ENCODE measurements at regions of chr1 and their contacts with region 1.

Region 1: GRCh38 chr1:103199001-103199400 is 90.7 kb upstream of the COL11A1 start:
- DNase-seq: no peak
- H3K4me3 ChIP-seq: no peak overlapping the region
- H3K27ac ChIP-seq: no peak overlapping the region
- H3K4me1 ChIP-seq: no peaks in the 10 kb centered on the region
- H3K27me3 ChIP-seq: no peaks in the 10 kb centered on the region
- CTCF ChIP-seq: no peak
- EP300 ChIP-seq: no peak
- POLR2A ChIP-seq: no peak

Region 2: DNA sequence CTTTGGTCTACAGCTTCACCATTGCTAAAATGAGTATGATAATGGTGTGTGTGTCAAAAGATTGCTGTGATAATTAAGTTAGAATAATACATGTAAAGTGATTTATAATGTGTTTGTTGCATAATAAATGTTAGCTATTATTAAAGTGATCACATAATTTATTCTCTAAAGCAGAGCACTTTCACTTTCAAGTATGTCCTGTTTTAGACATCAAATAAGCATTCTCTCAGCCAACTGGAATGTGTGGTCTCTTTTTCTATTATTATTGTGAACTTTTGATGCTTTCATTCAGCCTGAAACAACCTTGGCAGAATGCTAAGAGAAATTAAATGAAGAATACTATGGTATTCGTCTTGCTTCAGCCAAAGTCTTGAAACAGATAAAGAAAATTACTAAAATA is 12.1 kb after region 1 on chr1:
- intact Hi-C with region 1: loop called in 1 of 4 experiments (anchors 2 kb)
- DNase-seq: no peak
- H3K4me3 ChIP-seq: no peak overlapping the region
- H3K27ac ChIP-seq: no peak overlapping the region
- H3K4me1 ChIP-seq: no peaks in the 10 kb centered on the region
- H3K27me3 ChIP-seq: no peaks in the 10 kb centered on the region
- CTCF ChIP-seq: no peak
- EP300 ChIP-seq: no peak
- POLR2A ChIP-seq: no peak

Region 3: DNA sequence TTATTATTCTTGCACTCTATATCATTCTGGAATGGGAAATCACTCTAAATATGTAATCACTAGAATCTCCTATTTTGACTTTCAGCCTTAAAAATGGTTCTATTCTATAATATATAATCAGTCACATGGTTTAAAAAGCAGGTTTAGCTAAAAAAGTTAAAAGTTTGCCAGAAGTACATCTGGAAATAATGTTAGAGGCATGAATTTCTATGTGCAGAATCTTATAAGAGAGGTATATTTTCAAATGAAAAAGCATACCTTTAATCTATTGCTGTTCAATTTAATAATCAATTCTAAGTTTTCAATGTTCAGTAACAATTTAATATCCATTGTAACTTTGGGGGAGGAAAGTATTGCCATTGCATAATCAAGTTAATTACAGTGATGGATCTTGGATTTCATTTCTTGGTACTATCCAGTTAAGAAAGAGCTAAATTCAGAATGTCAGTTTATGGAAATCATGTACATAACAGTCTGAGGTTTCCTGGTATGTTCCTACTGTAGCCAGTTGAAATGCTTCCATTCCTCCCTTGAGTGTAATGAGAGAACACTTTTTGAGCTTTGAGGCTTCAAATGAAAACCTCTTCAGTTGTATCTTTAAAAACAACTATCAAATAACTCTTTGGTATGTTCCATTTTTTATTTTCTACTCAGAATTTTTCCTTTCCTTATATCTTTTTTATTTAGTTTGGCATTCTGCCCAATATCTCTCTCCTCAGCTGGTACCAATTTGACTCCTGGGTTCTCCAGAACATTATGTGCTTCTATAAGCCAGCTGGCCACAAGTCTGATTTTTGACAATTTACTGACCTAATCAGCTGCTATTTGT is 85.1 kb after region 1 on chr1:
- intact Hi-C with region 1: no loop called
- DNase-seq: no peak
- H3K4me3 ChIP-seq: no peak overlapping the region
- H3K27ac ChIP-seq: no peak overlapping the region
- H3K4me1 ChIP-seq: no peaks in the 10 kb centered on the region
- H3K27me3 ChIP-seq: no peaks in the 10 kb centered on the region
- CTCF ChIP-seq: no peak
- EP300 ChIP-seq: no peak
- POLR2A ChIP-seq: no peak